Testis (tissue), 5 donors: ENCODE measurements at regions of chr11 and their contacts with region 1.

Region 1: GRCh38 chr11:77127232-77127911 is 674 bp upstream of the MYO7A start:
- DNase-seq: peak; percentile 68
- H3K4me3 ChIP-seq: peak overlapping the region; percentile 6 to 42
- H3K27ac ChIP-seq: peak overlapping the region; percentile 6 to 30
- H3K4me1 ChIP-seq: peaks cover 45% of the 10 kb centered on the region
- H3K27me3 ChIP-seq: no peaks in the 10 kb centered on the region
- CTCF ChIP-seq: peak; percentile 99 to 100 (median 100)
- POLR2A ChIP-seq: no peak

Region 2: DNA sequence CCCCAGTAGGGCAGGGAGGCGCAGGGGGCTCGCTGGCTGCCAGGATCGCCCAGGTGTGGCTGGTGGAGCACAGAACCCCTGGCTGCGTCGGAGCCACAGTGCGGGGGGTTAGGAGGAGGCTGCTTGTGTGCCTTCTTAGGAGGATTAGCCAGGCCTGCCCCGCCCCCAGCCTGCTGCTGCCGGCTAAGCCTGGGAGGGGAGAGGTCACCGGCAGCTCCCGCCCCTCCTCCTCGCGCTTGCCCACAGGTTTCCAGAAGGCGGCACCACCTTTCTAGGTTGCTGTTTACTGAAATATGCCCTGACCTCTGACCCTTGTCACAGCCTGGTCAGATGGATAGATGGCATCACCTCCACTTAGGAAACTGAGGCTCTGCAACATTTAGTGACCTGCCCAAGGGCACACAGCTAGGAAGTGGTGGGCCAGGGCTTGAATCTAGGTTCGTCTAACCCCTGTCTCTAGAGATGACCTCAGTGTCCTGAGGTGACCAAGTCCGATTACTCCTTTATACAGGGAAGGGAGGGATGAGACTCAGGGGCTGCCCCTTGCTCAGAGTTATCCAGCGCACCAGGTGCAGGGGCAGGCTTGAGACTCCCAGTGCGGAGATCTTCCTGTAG is 44.6 kb after region 1 on chr11:
- intact Hi-C with region 1: no loop called
- DNase-seq: no peak
- H3K4me3 ChIP-seq: no peak overlapping the region
- H3K27ac ChIP-seq: no peak overlapping the region
- H3K4me1 ChIP-seq: peaks cover 6% of the 10 kb centered on the region
- H3K27me3 ChIP-seq: no peaks in the 10 kb centered on the region
- CTCF ChIP-seq: no peak
- POLR2A ChIP-seq: no peak

Region 3: GRCh38 chr11:77183431-77183984 is 56.1 kb after region 1 on chr11:
- intact Hi-C with region 1: loop called (anchors 5 kb)
- DNase-seq: no peak
- H3K4me3 ChIP-seq: no peak overlapping the region
- H3K27ac ChIP-seq: no peak overlapping the region
- H3K4me1 ChIP-seq: no peaks in the 10 kb centered on the region
- H3K27me3 ChIP-seq: no peaks in the 10 kb centered on the region
- CTCF ChIP-seq: no peak
- POLR2A ChIP-seq: no peak

Region 4: DNA sequence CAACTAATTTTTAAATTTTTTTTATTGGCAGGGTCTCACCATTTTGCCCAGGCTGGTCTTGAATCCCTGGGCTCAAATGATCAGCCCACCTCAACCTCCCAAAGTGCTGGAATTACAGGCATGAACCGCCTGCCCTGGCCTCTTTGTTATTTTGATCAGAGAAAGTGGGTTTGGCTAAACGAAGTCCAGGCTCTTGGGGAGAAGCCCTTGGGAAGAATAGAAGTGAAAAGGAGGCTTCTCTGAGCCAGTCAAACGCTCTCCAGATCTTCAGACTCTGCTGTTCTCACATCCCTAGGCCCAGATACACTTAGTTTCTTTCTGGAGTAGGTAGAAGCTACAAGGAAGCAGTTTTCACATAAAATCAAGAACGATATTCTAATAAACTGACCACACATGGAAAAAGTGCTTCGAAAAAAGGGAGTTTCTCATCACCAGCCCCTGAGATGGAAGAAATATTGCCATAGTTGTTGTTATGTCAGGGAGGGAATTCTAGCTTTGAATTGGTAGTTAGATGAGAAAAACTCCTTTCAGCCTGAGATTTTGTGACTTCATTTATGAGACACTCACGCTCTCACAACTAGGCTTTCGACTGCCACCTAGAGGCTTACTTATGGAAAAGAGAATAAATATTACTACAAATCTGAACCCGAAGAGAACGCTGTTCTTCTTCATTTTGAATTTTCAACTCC is 420.6 kb after region 1 on chr11:
- intact Hi-C with region 1: loop called (anchors 10 kb)
- DNase-seq: peak; percentile 51
- H3K4me3 ChIP-seq: no peak overlapping the region
- H3K27ac ChIP-seq: peak overlapping the region in 1 of 2 donors; percentile 23
- H3K4me1 ChIP-seq: peaks cover 5% of the 10 kb centered on the region
- H3K27me3 ChIP-seq: no peaks in the 10 kb centered on the region
- CTCF ChIP-seq: peak; percentile 34 to 62 (median 61)
- POLR2A ChIP-seq: no peak